ENCODE measurements at regions of chr20 and their contacts with region 1.

Region 1: GRCh38 chr20:25750765-25751696 is 54.4 kb upstream of the ZNF337 start:
- DNase-seq: peak; percentile 26 to 72 (median 44)
- H3K4me3 ChIP-seq: peak overlapping the region; percentile 47 to 54
- H3K4me3 Mint-ChIP-seq: peak overlapping the region; percentile 76 to 92 (median 88)
- H3K27ac ChIP-seq: peak overlapping the region; percentile 28
- H3K27ac Mint-ChIP-seq: peak overlapping the region; percentile 60 to 90 (median 84)
- H3K4me1 ChIP-seq: peaks cover 14% of the 10 kb centered on the region
- H3K4me1 Mint-ChIP-seq: peaks cover 3 to 31% (median 13%) of the 10 kb centered on the region in 4 donors
- H3K27me3 ChIP-seq: no peaks in the 10 kb centered on the region
- H3K27me3 Mint-ChIP-seq: no peaks in the 10 kb centered on the region

Region 2: DNA sequence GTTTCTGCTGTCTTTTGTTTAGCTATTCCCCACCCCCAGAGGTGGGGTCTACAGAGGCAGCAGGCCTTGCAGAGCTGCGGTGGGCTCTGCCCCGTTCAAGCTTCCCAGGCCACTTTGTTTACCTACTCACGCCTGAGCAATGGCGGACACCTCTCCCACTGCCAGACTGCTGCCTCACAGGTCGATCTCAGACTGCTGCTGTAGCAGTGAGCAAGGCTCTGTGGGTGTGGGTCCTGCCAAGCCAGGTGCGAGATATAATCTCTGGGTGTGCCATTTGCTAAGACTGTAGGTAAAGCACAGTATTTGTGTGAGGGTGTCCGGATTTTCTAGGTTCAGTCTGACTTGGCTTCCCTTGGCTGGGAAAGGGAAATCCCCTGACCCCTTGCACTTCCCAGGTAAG is 30.7 kb before region 1 on chr20:
- CTCF ChIA-PET with region 1: no interaction called
- POLR2A ChIA-PET with region 1: no interaction called
- intact Hi-C with region 1: loop called (anchors 1 kb)
- DNase-seq: no peak
- H3K4me3 ChIP-seq: no peak overlapping the region
- H3K4me3 Mint-ChIP-seq: peak overlapping the region in 2 of 8 donors; percentile 24 to 32
- H3K27ac ChIP-seq: no peak overlapping the region
- H3K27ac Mint-ChIP-seq: peak overlapping the region in 2 of 7 donors; percentile 22 to 38
- H3K4me1 ChIP-seq: peaks cover 21% of the 10 kb centered on the region
- H3K4me1 Mint-ChIP-seq: peaks cover 7 to 34% (median 24%) of the 10 kb centered on the region in 4 donors
- H3K27me3 ChIP-seq: no peaks in the 10 kb centered on the region
- H3K27me3 Mint-ChIP-seq: no peaks in the 10 kb centered on the region